ENCODE measurements at regions of chr4 and their contacts with region 1.

Region 1: DNA sequence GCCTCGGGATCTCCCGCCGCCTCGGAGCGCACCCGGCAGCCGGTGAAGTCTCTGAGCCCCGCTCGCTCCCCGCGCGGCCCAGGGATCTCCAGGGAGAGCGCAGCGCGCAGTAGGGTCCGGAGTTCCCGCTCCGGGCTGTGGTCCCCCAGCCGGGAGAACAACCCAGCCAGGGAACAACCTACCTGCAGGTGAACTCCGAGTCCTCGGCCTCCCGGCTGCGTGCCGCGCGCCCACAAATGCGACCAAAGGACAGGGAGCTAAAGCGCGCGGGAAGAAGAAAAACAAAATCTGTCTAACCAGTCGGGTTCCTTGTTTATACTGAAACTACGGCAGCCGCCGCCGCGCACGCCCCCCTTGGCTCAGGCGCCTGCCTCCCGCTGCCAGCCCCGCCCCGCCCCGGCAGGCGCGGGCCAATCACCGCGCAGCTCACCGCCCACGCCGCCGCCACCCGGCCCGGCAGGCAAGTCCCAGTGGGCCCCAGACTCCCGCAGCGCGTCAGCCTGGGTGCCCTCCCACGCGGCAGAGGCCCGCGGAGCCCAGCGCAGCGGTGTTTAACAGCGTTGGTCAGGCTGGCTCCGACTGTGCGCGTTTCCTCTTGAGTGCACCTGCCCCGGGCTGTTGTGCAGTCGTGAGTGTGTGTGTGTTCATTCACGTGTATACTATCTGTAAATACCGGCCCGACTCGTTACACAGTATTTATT is at the start of gene RASGEF1B:
- DNase-seq: peak; percentile 86
- H3K4me3 Mint-ChIP-seq: peak within 1 kb of the TSS; percentile 85
- H3K27ac Mint-ChIP-seq: peak within 1 kb of the TSS; percentile 70
- H3K4me1 Mint-ChIP-seq: peaks cover 33% of the 10 kb centered on the region
- H3K27me3 Mint-ChIP-seq: peaks cover 39% of the 10 kb centered on the region
- total RNA-seq, gene RASGEF1B: 0.39 and 0.55 TPM in 2 replicates

Region 2: GRCh38 chr4:81494031-81494431 is 22.3 kb after region 1 on chr4:
- intact Hi-C with region 1: loop called (anchors 1 kb)
- DNase-seq: no peak
- H3K4me3 Mint-ChIP-seq: peak overlapping the region; percentile 17
- H3K27ac Mint-ChIP-seq: no peak overlapping the region
- H3K4me1 Mint-ChIP-seq: peaks cover 34% of the 10 kb centered on the region
- H3K27me3 Mint-ChIP-seq: peaks cover 21% of the 10 kb centered on the region

Region 3: DNA sequence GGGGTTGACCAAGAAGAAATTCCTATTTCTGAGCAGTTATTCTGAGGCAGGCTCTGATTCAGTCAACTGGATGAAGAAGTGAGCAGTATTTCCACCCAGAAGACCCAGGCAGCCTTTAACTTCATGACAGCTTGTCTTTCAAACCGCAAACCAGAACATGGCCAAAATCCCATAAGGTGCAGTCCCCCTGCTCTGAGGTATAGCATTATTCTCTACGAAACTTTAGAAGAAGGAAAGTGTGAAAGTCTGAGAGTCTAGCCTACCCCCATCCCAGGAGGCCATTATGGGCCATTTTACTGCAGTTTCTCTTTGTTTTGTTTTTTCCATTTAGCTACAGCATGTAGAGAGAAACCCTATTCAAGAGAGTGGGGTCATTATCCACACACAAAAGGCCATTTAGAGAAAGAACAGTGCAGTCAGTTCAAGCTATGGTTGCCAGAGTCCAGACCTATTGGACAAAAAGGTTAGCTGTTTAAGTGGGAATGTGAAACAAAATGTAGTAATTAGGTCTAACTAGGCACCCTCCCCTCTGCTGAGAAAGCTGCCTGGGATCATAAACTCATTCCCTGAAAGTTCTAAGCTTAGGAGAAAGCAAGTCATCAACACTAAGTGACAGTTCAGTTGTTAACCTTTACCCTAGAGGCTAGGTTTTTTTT is 52.1 kb after region 1 on chr4:
- intact Hi-C with region 1: no loop called
- DNase-seq: no peak
- H3K4me3 Mint-ChIP-seq: no peak overlapping the region
- H3K27ac Mint-ChIP-seq: no peak overlapping the region
- H3K4me1 Mint-ChIP-seq: no peaks in the 10 kb centered on the region
- H3K27me3 Mint-ChIP-seq: no peaks in the 10 kb centered on the region

Region 4: DNA sequence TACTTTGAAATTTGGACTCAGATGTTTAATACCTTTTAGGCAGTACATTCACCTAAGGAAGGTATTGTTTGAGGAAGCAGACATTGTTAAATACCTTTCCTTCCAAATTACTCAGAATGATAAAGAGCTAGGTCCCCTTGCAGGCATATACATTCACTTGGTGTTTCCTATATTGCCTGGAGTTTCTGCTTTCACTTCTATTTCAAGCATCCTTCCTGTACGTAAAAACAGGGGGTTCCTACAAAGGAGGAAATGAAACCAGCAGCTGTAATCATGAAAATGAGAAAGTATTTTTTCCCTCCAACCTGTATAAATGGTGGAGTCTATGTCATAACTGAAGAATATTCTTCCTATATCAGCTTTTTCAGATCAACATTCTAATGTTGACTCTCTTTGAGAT is 90.4 kb after region 1 on chr4:
- intact Hi-C with region 1: loop called (anchors 5 kb)
- DNase-seq: no peak
- H3K4me3 Mint-ChIP-seq: no peak overlapping the region
- H3K27ac Mint-ChIP-seq: no peak overlapping the region
- H3K4me1 Mint-ChIP-seq: peaks cover 10% of the 10 kb centered on the region
- H3K27me3 Mint-ChIP-seq: peaks cover 5% of the 10 kb centered on the region

Region 5: GRCh38 chr4:81574991-81575390 is 103.3 kb after region 1 on chr4:
- intact Hi-C with region 1: no loop called
- DNase-seq: no peak
- H3K4me3 Mint-ChIP-seq: no peak overlapping the region
- H3K27ac Mint-ChIP-seq: no peak overlapping the region
- H3K4me1 Mint-ChIP-seq: no peaks in the 10 kb centered on the region
- H3K27me3 Mint-ChIP-seq: peaks cover 3% of the 10 kb centered on the region

Region 6: GRCh38 chr4:81724925-81725329 is 253.2 kb after region 1 on chr4:
- intact Hi-C with region 1: loop called (anchors 2 kb)
- DNase-seq: peak; percentile 29
- H3K4me3 Mint-ChIP-seq: no peak overlapping the region
- H3K27ac Mint-ChIP-seq: no peak overlapping the region
- H3K4me1 Mint-ChIP-seq: peaks cover 8% of the 10 kb centered on the region
- H3K27me3 Mint-ChIP-seq: peaks cover 8% of the 10 kb centered on the region

Region 7: DNA sequence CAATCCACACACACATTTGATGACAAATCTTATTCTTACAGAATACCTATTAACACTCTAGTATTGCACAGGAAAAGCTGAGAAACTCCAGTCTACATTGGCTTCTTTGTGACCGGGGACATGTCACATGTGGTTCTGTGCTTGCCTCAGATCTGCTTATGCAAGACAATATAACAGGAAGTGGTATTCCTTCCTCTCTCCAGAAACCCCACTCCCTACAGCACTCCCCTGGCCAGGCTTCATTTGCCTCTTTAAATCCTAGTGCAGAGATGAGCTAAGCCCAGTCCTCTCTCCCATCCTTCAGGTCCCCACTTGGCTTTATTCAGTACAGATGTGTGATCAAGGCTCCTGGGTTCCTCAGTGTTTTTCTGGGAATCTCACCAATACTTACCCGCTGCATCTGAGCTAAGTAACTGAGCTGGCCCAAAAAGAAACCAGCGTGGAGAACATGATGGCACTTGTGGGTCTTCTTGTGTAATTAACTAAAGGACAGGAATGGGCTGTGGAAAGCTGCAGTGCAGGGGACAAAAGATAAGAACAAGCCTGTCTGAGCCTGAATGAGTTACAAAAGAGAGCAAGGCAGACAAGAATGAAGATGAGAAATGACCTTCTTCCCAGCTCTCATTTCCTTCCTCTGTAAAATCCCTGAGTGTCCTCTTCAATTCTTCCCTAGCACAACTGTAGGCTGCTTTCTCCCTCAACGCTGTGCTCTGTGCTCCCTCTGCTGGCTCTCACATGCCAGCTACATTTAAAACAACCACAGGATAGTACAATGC is 796.5 kb after region 1 on chr4:
- intact Hi-C with region 1: loop called (anchors 1 kb)
- DNase-seq: no peak
- H3K4me3 Mint-ChIP-seq: no peak overlapping the region
- H3K27ac Mint-ChIP-seq: no peak overlapping the region
- H3K4me1 Mint-ChIP-seq: peaks cover 8% of the 10 kb centered on the region
- H3K27me3 Mint-ChIP-seq: peaks cover 5% of the 10 kb centered on the region

Region 8: DNA sequence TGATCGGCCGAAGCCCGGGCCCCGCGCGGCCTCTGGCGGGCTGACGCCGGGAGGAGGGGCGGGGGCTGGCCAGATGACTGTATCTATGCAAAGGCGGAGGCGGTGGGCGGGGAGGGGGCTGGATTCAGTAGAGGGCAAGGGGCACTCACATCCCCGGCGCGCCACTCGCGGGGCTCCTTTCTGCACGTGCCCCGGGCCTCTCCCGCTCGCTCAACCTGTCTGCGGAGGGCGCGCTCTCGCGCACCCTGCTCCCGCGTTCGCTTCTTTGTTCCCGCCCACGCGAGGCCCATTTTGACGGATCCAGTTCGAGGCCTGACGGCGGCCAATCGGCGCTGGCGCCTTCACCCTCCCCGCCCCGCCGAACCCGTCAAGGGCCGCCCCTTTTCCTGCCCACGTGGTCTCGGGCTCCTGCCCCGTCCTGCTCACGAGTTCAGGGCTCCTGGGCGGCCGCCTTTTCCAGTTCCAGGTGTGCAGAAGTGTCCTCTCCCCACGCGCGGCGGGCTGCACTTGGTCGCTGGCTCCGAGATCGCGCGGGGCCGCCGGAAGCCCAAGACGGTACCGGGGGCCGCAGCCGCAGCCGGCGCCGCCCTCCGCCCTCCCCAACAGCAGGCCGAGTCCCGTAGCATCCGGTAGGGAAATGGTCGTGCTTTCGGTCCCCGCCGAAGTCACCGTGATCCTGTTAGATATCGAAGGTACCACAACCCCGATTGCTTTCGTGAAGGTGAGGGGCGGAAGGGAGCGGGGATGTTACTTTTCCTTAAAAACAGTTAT is 958.6 kb after region 1 on chr4 and contains the starts of genes ENOPH1 and HNRNPDL:
- intact Hi-C with region 1: loop called (anchors 5 kb)
- DNase-seq: peak; percentile 96
- H3K4me3 Mint-ChIP-seq: peak within 1 kb of the TSS; percentile 98
- H3K27ac Mint-ChIP-seq: peak within 1 kb of the TSS; percentile 99
- H3K4me1 Mint-ChIP-seq: peaks cover 44% of the 10 kb centered on the region
- H3K27me3 Mint-ChIP-seq: no peaks in the 10 kb centered on the region
- total RNA-seq, gene ENOPH1: 64.5 and 65.9 TPM in 2 replicates
- total RNA-seq, gene HNRNPDL: 470 and 486 TPM in 2 replicates

Measured in activated T-helper 2 cell treated with anti-CD3 and anti-CD28 coated beads, Interferon-gamma antibody, Interleukin-2, Interleukin-4, amounts not matched to agents 10 μg/mL and 5 μg/mL and 100 μg/mL, durations not matched to agents 14 hours and 24 hours and 36 hours (primary cell).